Motor neuron (in vitro differentiated cells): ENCODE measurements at regions of chr22 and their contacts with region 1.

Region 1: GRCh38 chr22:29689880-29690213 is 30.0 kb upstream of the CABP7 start:
- ATAC-seq: peak; percentile 37 to 90 (median 86)
- H3K4me3 ChIP-seq: no peak overlapping the region
- H3K27ac ChIP-seq: no peak overlapping the region
- H3K4me1 ChIP-seq: peaks cover 14 to 22% of the 10 kb centered on the region in 2 donors

Region 2: DNA sequence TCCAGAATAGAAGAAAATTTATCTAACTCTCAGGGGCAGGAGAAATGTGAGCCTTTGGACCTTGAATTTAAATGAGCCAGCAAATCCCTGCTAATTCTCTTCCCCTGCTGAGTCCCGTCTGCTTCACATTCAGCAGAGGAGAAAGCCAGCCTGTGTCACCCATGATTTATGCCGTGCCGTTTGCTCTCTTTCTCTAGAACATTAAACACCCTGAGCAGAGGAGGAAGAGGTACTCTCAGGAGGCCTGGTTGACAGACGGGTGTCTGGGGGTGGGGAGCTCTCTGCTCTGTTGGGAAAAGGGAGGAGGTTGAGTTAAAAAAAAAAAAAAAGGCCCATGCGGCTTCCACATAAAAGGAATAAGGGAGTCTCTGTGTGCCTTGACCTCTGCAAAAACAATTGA is 181.8 kb after region 1 on chr22:
- in situ Hi-C with region 1: no loop called
- ATAC-seq: peak in 6 of 8 experiments; percentile 25 to 100 (median 99)
- H3K4me3 ChIP-seq: no peak overlapping the region
- H3K27ac ChIP-seq: peak overlapping the region; percentile 58 to 60
- H3K4me1 ChIP-seq: peaks cover 19 to 21% of the 10 kb centered on the region in 2 donors

Region 3: GRCh38 chr22:30005213-30005857 is 315.5 kb after region 1 on chr22:
- in situ Hi-C with region 1: loop called in 3 of 9 experiments (anchors 25 kb)
- ATAC-seq: peak; percentile 48 to 94 (median 82)
- H3K4me3 ChIP-seq: no peak overlapping the region
- H3K27ac ChIP-seq: no peak overlapping the region
- H3K4me1 ChIP-seq: peaks cover 0 to 23% of the 10 kb centered on the region in 2 donors